PC-9 (cell line): ENCODE measurements at regions of chr19 and their contacts with region 1.

Region 1: GRCh38 chr19:42301656-42302203 is at the start of gene PRR19:
- DNase-seq: no peak
- H3K4me3 ChIP-seq: peak within 1 kb of the TSS; percentile 78
- H3K27ac ChIP-seq: no peak within 1 kb of the TSS
- H3K4me1 ChIP-seq: peaks cover 7% of the 10 kb centered on the region; the same call in 1 of the 2 replicates
- H3K27me3 ChIP-seq: no peaks in the 10 kb centered on the region
- CTCF ChIP-seq: no peak
- total RNA-seq, gene PRR19: 0.85 and 1.1 TPM in 2 replicates

Region 2: GRCh38 chr19:42352301-42353259 is 50.9 kb after region 1 on chr19:
- CTCF ChIA-PET with region 1: no interaction called
- POLR2A ChIA-PET with region 1: no interaction called
- intact Hi-C with region 1: no loop called
- DNase-seq: no peak
- H3K4me3 ChIP-seq: no peak overlapping the region
- H3K27ac ChIP-seq: no peak overlapping the region
- H3K4me1 ChIP-seq: no peaks in the 10 kb centered on the region
- H3K27me3 ChIP-seq: no peaks in the 10 kb centered on the region
- CTCF ChIP-seq: no peak

Region 3: DNA sequence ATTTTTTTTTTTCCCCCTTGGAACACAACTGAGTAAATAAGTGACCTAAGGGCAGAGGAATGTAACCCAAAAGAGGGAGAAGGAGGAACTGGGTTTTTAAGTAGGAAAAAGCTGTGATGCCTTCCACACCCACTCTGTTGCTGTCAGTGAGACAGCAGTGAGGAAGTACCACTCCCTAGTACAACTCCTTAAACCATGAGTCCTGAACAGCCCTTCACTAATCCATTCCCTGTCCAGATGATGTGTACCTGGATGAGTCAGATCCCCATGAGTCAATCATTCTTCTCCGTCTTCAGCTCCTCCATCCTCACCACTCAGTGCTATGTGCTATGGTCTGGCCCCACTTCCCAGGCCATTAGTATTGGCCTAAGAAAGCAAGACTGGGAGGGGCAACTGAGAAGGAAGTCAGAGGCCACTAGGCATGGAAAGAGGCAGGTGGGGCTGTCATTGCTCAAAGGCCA is 153.9 kb after region 1 on chr19:
- CTCF ChIA-PET with region 1: interaction called, 14 read pairs
- POLR2A ChIA-PET with region 1: no interaction called
- intact Hi-C with region 1: no loop called
- DNase-seq: peak; percentile 68 to 98
- H3K4me3 ChIP-seq: no peak overlapping the region
- H3K27ac ChIP-seq: peak overlapping the region; percentile 78
- H3K4me1 ChIP-seq: peaks cover 31% of the 10 kb centered on the region
- H3K27me3 ChIP-seq: no peaks in the 10 kb centered on the region
- CTCF ChIP-seq: no peak